Activated CD4-positive, alpha-beta memory T cell treated with anti-CD3 and anti-CD28 coated beads, Interleukin-2, amount 10 ng/mL, durations not matched to agents 7 days and 5 days (primary cell): ENCODE measurements at regions of chr16 and their contacts with region 1.

Region 1: GRCh38 chr16:67800338-67800926 is 5.9 kb downstream of the RANBP10 start:
- DNase-seq: no peak
- H3K4me3 Mint-ChIP-seq: no peak overlapping the region
- H3K27ac Mint-ChIP-seq: peak overlapping the region; percentile 79
- H3K4me1 Mint-ChIP-seq: peaks cover 55% of the 10 kb centered on the region
- H3K27me3 Mint-ChIP-seq: no peaks in the 10 kb centered on the region

Region 2: GRCh38 chr16:67781565-67781921 is 18.9 kb before region 1 on chr16:
- CTCF ChIA-PET with region 1: no interaction called
- POLR2A ChIA-PET with region 1: interaction called, 10 read pairs
- DNase-seq: peak; percentile 35
- H3K4me3 Mint-ChIP-seq: no peak overlapping the region
- H3K27ac Mint-ChIP-seq: peak overlapping the region; percentile 53
- H3K4me1 Mint-ChIP-seq: peaks cover 26% of the 10 kb centered on the region
- H3K27me3 Mint-ChIP-seq: no peaks in the 10 kb centered on the region